ENCODE measurements at regions of chr17 and their contacts with region 1.

Region 1: GRCh38 chr17:35842239-35842638 is 26.5 kb downstream of the HEATR9 start:
- DNase-seq: no peak
- ATAC-seq: no peak
- H3K4me3 Mint-ChIP-seq: no peak overlapping the region
- H3K27ac Mint-ChIP-seq: no peak overlapping the region
- H3K4me1 Mint-ChIP-seq: no peaks in the 10 kb centered on the region
- H3K27me3 Mint-ChIP-seq: no peaks in the 10 kb centered on the region
- CTCF ChIP-seq: no peak

Region 2: DNA sequence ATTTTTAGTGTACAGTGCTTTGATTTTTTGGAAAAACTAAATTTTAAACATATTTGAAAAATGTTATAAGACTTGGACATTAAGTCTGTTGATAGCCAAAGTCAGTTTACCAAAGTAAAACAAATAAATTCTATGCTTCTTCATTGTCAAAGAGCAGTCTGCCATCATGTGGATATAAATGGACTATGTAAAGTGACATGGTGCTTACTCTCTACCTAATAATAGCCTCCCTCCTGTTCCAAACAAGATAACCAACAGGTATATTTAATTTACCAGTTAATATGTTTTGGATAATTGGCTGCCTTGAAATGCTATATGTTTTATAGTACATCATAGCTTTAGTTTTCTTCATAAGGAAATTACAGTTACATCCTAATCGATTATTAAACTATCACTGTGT is 17.0 kb before region 1 on chr17:
- CTCF ChIA-PET with region 1: no interaction called
- POLR2A ChIA-PET with region 1: no interaction called
- intact Hi-C with region 1: loop called (anchors 2 kb)
- DNase-seq: no peak
- ATAC-seq: no peak
- H3K4me3 Mint-ChIP-seq: no peak overlapping the region
- H3K27ac Mint-ChIP-seq: no peak overlapping the region
- H3K4me1 Mint-ChIP-seq: no peaks in the 10 kb centered on the region
- H3K27me3 Mint-ChIP-seq: no peaks in the 10 kb centered on the region
- CTCF ChIP-seq: no peak

Measured in activated B cell treated with CpG ODN at 0.5 μM for 24 hours (primary cell).